Naive thymus-derived CD8-positive, alpha-beta T cell (primary cell): ENCODE measurements at regions of chr17 and their contacts with region 1.

Region 1: DNA sequence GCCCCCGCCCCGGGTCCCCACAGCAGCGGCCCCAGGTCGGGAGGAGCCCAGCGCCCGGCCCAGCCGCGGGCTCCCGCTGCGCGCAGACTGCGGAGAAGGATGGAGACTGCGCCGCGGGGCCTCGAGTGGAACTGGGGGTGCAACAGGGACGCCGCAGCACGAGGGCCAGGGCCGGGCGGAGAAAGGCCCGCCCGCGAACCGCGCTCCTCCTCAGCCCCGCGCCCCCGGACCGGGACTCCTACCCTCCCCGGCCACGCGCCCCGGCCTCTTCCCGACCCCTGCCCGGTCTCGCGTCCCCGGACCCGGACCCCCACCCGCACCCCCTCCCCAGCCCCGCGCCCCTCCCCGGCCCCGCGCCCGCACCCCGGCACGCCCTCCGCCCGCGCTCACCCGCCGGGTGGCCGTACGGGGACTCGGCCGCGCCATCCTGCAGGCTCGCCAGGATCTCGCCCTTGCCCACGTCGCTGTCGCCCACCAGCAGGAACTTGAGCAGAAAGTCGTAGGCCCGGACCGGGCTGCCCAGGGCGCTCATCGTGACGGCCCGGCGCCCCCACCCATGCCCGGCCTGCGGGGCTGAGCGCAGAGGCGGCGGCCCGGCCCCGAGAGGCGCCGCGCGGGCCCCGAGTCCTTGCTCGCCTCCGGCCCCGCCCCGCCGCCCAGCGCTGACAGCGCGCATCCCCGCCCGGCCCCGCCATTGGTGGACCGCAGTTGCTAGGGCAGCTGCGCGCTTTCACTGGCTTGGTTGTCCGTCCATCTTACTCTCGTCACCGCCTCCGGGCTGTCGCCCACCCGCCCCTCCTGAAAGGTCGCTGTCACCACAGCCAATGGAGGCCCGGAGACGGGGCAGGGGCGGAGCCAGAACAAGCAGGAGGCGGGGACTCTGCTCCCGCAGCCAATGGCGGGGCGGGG is at the start of gene RAB40B:
- DNase-seq: peak; percentile 96 to 99 (median 99)
- ATAC-seq: peak; percentile 97 to 98
- H3K4me3 Mint-ChIP-seq: peak within 1 kb of the TSS; percentile 78 to 94 (median 90)
- H3K27ac Mint-ChIP-seq: peak within 1 kb of the TSS in 6 of 10 donors; percentile 41 to 83 (median 75)
- H3K4me1 Mint-ChIP-seq: peaks cover 2 to 15% (median 10%) of the 10 kb centered on the region in 4 donors
- H3K27me3 Mint-ChIP-seq: peaks cover 0 to 10% (median 0%) of the 10 kb centered on the region in 5 donors
- polyA plus RNA-seq, gene RAB40B: 1.4 to 2.7 (median 1.7) TPM

Region 2: DNA sequence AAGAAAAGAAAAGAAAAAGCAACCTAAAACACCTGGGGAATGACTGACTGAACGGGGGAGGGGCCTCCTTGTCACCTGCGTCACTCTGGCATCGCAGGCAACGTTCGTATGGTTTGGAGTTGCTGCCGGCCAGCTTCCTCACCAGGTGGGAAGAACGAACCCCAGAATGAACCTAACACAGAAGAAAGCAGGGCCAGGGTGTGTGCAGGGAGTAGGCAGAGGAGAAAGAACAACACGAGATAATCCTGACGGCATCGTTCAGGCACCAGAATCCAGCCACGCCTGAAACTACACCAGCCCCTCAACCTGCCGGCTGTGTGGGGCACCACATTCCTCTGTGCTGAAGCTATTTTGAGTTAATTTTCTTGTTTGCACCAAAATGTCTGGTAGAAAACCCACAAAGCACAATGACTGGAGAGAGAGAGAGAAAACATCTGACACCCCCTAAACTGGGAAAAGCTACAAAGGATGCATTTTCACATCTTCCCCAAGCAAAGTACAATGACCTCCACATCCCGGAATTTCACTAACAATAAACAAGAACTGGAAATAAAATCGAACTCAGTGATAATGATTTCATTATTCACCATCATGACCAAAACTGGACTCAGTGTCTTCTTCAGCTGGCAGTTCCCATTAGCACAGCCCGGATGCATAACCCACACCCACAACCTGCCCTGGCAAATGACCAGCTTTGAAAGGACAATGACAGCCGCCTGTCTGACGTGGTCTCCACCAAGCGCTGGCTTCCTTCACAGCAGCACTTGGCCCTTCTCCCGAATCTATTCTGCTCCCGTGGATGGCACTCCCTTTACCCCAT is 23.5 kb before region 1 on chr17:
- POLR2A ChIA-PET with region 1: no interaction called
- DNase-seq: no peak
- ATAC-seq: no peak
- H3K4me3 Mint-ChIP-seq: no peak overlapping the region
- H3K27ac Mint-ChIP-seq: no peak overlapping the region
- H3K4me1 Mint-ChIP-seq: peaks cover 0 to 8% (median 5%) of the 10 kb centered on the region in 4 donors
- H3K27me3 Mint-ChIP-seq: no peaks in the 10 kb centered on the region

Region 3: DNA sequence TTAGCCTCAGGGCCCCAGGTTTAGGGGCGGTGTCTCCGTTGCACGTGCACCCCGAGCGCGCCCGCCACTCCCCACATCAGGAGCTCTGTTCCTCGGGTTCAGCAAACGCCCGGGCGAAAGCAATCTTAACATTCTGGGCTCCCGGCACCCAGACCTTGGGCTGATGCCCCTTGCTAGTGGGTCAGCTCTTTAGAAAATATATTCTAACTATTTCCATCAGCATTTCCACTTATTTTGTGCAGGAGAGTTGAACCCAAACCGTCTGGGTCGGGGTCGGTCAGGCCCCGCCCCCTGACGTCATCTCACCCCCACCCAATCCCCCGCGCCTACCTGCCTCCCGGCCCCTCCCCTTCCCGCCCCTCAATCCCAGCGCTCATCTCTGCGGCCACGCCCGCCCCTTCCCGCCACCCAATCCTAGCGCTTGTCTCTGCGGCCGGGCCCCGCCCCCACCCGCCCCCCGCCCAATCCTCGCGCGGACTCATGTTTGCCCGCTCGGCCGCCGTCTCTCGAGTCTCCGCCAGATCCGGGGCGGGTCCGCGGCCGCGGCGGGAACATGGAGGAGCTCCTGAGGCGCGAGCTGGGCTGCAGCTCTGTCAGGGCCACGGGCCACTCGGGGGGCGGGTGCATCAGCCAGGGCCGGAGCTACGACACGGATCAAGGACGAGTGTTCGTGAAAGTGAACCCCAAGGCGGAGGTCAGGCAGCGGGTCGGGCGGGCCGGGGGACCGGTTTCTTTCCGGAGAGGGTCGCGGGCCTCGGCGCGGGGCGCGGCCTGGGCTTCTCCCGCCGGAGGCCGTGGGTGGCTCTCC is 18.1 kb after region 1 on chr17 and contains the start of gene FN3KRP:
- POLR2A ChIA-PET with region 1: interaction called, 20 read pairs
- DNase-seq: peak; percentile 80 to 97 (median 86)
- ATAC-seq: peak; percentile 92
- H3K4me3 Mint-ChIP-seq: peak within 1 kb of the TSS; percentile 89 to 99 (median 95)
- H3K27ac Mint-ChIP-seq: peak within 1 kb of the TSS; percentile 38 to 95 (median 93)
- H3K4me1 Mint-ChIP-seq: peaks cover 7 to 25% (median 24%) of the 10 kb centered on the region in 4 donors
- H3K27me3 Mint-ChIP-seq: no peaks in the 10 kb centered on the region
- polyA plus RNA-seq, gene FN3KRP: 28.6 to 46.2 (median 33.9) TPM